WTC11 (cell line): ENCODE measurements at regions of chr6 and their contacts with region 1.

Region 1: DNA sequence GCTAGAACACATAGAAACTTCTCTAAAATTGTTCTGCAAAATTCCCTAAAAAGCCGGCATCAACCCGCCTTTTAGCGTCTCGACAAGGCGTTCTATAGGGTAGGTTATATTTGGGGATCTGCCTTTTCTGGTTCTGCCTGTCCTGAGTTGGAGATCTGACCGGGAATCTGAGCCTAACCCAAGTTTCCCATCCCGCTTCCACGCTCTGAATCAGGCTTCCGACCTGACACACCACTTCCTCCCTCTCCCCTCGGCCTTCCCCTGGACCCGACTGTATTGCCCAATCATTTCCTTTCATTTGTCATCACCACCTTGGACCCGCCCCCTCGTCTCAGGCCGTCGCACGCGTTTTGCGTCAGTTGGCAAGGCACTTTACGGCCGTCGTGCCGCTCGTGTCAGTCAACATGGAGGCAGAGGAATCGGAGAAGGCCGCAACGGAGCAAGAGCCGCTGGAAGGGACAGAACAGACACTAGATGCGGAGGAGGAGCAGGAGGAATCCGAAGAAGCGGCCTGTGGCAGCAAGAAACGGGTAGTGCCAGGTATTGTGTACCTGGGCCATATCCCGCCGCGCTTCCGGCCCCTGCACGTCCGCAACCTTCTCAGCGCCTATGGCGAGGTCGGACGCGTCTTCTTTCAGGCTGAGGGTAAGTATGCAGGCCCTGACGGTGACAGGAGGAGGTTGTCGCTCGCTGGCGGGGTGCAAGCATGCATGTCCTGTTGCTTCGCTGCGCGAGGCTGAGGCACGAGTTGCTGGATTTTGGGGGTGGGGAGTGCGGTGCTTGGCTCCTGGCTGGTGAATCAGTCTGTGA is at the start of gene ABT1:
- DNase-seq: peak; percentile 99
- ATAC-seq: peak; percentile 75
- H3K4me3 Mint-ChIP-seq: no peak within 1 kb of the TSS
- H3K27ac Mint-ChIP-seq: no peak within 1 kb of the TSS
- H3K4me1 Mint-ChIP-seq: peaks cover 11% of the 10 kb centered on the region
- H3K27me3 Mint-ChIP-seq: peaks cover 9% of the 10 kb centered on the region; the same call in 1 of the 2 replicates
- CTCF ChIP-seq: no peak
- total RNA-seq, gene ABT1: 21.0 to 22.1 TPM (median 21.6 TPM) in 3 replicates

Region 2: GRCh38 chr6:26204332-26205165 is 392.2 kb before region 1 on chr6:
- CTCF ChIA-PET with region 1: no interaction called
- POLR2A ChIA-PET with region 1: no interaction called
- DNase-seq: peak; percentile 90
- ATAC-seq: peak; percentile 58
- H3K4me3 Mint-ChIP-seq: no peak overlapping the region
- H3K27ac Mint-ChIP-seq: no peak overlapping the region
- H3K4me1 Mint-ChIP-seq: peaks cover 22% of the 10 kb centered on the region
- H3K27me3 Mint-ChIP-seq: no peaks in the 10 kb centered on the region
- CTCF ChIP-seq: no peak

Region 3: DNA sequence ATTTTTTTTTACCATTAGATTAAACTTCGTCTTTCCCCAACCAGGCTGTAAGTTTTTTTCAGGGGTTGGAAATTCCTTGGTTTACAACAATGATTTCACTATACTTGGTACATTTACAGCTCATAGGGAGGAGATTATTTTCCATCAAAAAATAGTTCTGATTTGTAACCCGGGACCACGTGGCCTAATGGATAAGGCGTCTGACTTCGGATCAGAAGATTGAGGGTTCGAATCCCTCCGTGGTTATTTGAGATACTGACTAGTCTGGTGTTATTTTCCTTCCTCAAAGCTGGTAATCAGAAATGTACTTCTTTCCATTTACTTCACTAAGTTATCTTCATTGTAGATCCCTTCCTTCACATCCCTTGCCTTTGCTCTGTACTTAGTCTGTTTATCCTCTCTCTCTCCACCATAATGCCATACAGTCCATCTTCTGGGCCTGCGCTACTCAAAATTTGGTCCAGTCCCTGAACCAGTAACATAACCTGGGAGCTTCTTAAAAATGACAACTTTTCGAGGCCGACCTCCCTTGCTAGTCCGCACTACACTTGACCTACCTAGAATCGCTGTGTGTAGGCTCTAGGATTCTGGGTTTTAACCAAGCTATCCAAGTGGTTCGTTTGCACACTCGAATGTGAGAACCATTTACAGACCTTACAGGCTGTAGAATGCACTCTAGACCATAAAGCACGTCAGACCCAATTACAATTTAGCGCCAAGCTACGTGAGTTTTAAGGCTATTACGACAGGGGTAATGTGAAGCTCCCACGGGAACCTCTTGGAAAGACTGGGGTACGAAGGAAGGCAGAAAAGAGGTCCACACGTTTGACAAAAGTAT is 273.9 kb before region 1 on chr6:
- CTCF ChIA-PET with region 1: interaction called, 13 read pairs
- POLR2A ChIA-PET with region 1: no interaction called
- DNase-seq: peak; percentile 52
- ATAC-seq: peak; percentile 66
- H3K4me3 Mint-ChIP-seq: peak overlapping the region; percentile 87
- H3K27ac Mint-ChIP-seq: peak overlapping the region; percentile 51
- H3K4me1 Mint-ChIP-seq: peaks cover 28% of the 10 kb centered on the region
- H3K27me3 Mint-ChIP-seq: no peaks in the 10 kb centered on the region; the same call in 1 of the 2 replicates
- CTCF ChIP-seq: no peak

Region 4: GRCh38 chr6:26329763-26330511 is 266.8 kb before region 1 on chr6:
- CTCF ChIA-PET with region 1: interaction called, 25 read pairs
- POLR2A ChIA-PET with region 1: no interaction called
- DNase-seq: peak; percentile 75
- ATAC-seq: 0 out of 2 replicates have a peak, but pooled peaks have one; percentile 13
- H3K4me3 Mint-ChIP-seq: peak overlapping the region; percentile 94
- H3K27ac Mint-ChIP-seq: no peak overlapping the region
- H3K4me1 Mint-ChIP-seq: peaks cover 9% of the 10 kb centered on the region
- H3K27me3 Mint-ChIP-seq: peaks cover 24% of the 10 kb centered on the region
- CTCF ChIP-seq: no peak

Region 5: GRCh38 chr6:26537846-26538571 is 58.8 kb before region 1 on chr6 and contains the start of gene HMGN4:
- CTCF ChIA-PET with region 1: interaction called, 19 read pairs
- POLR2A ChIA-PET with region 1: no interaction called
- DNase-seq: peak; percentile 81
- ATAC-seq: peak; percentile 70
- H3K4me3 Mint-ChIP-seq: peak within 1 kb of the TSS; percentile 96
- H3K27ac Mint-ChIP-seq: peak within 1 kb of the TSS; percentile 100
- H3K4me1 Mint-ChIP-seq: peaks cover 34% of the 10 kb centered on the region
- H3K27me3 Mint-ChIP-seq: no peaks in the 10 kb centered on the region
- CTCF ChIP-seq: no peak
- total RNA-seq, gene HMGN4: 57.1 to 67.4 TPM (median 57.6 TPM) in 3 replicates

Region 6: GRCh38 chr6:26556263-26557070 is 40.3 kb before region 1 on chr6:
- CTCF ChIA-PET with region 1: interaction called, 12 read pairs
- POLR2A ChIA-PET with region 1: no interaction called
- DNase-seq: peak; percentile 77
- ATAC-seq: peak; percentile 73
- H3K4me3 Mint-ChIP-seq: no peak overlapping the region
- H3K27ac Mint-ChIP-seq: peak overlapping the region; percentile 43
- H3K4me1 Mint-ChIP-seq: peaks cover 7% of the 10 kb centered on the region
- H3K27me3 Mint-ChIP-seq: no peaks in the 10 kb centered on the region; the same call in 1 of the 2 replicates
- CTCF ChIP-seq: no peak

Region 7: DNA sequence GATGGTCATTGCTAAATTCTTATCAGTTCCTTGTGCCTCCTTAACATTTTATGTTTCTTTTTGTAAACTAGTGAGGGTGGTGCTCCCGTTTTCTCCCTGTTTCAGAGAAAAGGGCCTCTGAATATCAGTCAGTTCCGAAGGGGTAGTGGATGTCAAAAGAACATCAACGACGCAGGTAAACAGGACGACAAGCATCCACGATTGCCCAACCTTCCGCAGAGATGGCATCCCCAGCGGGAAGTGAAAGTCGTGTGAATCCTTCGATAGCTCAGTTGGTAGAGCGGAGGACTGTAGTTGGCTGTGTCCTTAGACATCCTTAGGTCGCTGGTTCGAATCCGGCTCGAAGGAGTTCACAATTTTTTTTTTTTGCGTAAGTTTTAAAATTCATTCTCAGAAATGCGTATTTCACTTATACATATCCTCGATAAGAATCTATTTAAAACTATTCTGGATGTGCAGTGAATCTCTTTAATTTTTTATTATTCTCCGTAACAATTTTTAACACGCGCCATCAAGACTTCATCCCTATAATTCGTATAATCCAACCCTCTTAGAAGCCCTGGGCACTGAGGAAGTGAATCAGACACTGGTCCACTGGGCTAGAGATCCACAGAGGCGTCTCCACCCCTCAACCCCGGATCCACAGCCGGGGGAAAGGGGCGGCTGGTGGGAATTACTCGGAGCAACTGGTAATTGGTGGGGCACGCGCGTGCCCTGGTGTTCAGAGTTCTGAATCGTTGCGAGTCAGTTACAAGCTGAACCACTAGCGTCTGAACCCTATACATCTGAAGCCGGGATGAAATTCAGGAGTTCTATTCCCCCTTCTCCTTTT is 28.0 kb before region 1 on chr6:
- CTCF ChIA-PET with region 1: interaction called, 181 read pairs
- POLR2A ChIA-PET with region 1: interaction called, 4 read pairs
- DNase-seq: peak; percentile 98
- ATAC-seq: peak; percentile 31
- H3K4me3 Mint-ChIP-seq: peak overlapping the region; percentile 97
- H3K27ac Mint-ChIP-seq: peak overlapping the region; percentile 58
- H3K4me1 Mint-ChIP-seq: peaks cover 9% of the 10 kb centered on the region; the same call in 1 of the 2 replicates
- H3K27me3 Mint-ChIP-seq: peaks cover 4% of the 10 kb centered on the region
- CTCF ChIP-seq: no peak

Region 8: DNA sequence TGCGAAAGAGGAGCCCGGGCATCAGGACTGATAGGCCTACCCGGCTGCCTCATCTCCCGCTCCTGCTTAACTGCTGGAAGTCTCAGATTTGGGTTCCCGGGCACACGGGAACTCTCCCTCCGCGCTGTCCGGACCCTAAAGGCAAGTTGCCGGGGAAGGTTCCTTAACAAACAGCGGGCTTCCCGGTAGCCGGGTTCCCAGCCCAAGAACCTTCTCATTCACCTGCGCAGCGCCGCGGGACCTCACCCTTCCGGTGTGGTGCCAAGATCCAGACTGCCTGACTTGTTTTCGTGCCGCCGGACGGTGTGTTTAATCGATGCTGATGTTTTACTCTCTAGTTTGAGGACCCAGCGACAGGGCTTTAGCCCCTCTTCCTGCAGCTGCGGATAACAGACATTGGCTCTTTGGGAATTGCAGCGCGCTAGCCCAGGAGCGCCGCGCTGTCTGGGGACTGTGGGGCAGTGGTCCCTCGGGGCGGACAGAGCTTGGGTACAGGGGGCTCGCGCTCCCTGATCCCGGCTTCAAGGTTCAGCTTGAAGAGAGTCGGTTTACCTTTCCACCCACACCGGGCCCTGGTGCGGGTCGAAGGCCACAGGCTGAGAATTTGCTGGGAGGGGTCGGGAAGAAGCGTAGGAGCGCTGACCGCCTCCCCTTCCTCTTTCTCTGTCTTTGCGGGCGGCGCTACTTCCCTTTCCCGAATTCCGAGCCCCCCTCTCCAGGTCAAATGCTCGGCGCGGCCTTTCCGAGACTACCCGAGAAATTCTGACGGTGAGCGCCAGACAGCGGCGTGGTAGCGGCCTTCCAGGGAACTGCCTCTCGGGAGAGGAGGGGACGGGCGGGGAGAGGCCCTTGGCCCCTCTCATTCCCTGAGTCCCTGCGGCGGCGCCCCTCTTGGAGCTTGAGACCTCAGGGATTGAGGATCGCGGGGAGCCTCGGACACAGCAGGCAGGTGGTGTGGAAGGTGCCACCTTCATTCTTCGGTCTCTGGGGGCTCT is 17.2 kb after region 1 on chr6:
- CTCF ChIA-PET with region 1: interaction called, 10 read pairs
- POLR2A ChIA-PET with region 1: no interaction called
- DNase-seq: peak; percentile 68
- ATAC-seq: peak; percentile 77
- H3K4me3 Mint-ChIP-seq: peak overlapping the region; percentile 87
- H3K27ac Mint-ChIP-seq: no peak overlapping the region
- H3K4me1 Mint-ChIP-seq: peaks cover 11% of the 10 kb centered on the region
- H3K27me3 Mint-ChIP-seq: peaks cover 80% of the 10 kb centered on the region
- CTCF ChIP-seq: no peak